Transverse colon (tissue), 4 donors: ENCODE measurements at regions of chr15 and their contacts with region 1.

Region 1: GRCh38 chr15:99169769-99170311 is 65.0 kb downstream of the SYNM start:
- DNase-seq: peak; percentile 54
- H3K4me3 ChIP-seq: no peak overlapping the region
- H3K27ac ChIP-seq: peak overlapping the region; percentile 83 to 92 (median 87)
- H3K4me1 ChIP-seq: peaks cover 5 to 30% (median 9%) of the 10 kb centered on the region in 4 donors
- H3K27me3 ChIP-seq: no peaks in the 10 kb centered on the region
- CTCF ChIP-seq: no peak
- EP300 ChIP-seq: peak; percentile 90
- POLR2A ChIP-seq: no peak

Region 2: DNA sequence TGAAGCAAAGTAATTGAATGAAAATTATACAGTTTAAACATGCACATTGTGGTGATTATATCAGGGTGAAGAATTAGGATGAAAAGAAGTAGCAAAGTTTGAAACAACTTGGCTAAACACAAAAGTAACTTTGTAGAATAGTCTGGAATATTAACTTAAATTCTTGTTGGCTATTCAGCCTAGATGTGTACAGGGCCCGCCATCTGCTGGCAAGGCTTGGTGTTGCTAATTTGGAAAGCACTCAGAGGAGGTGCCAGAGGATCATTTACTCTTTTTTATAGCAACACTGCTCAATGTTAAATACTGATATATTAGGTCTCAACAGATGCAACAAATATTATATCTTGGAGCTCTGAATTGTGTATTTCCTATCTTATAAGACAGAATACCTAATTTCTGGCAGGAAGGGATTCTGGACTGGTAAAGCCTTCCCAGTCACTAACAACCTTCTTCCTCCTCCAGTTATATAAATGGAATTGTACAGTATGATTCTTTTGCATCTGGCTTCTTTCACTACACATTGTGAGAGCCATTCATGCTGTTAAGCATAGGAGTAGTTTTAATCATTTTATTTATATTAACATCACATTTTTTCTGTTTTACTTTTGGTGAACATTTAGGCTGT is 43.5 kb after region 1 on chr15:
- in situ Hi-C with region 1: no loop called
- intact Hi-C with region 1: loop called (anchors 5 kb)
- DNase-seq: peak; percentile 80
- H3K4me3 ChIP-seq: no peak overlapping the region
- H3K27ac ChIP-seq: peak overlapping the region; percentile 59 to 79 (median 71)
- H3K4me1 ChIP-seq: peaks cover 0 to 9% (median 0%) of the 10 kb centered on the region in 4 donors
- H3K27me3 ChIP-seq: no peaks in the 10 kb centered on the region
- CTCF ChIP-seq: peak; percentile 79 to 85 (median 81)
- EP300 ChIP-seq: no peak
- POLR2A ChIP-seq: no peak